Activated CD8-positive, alpha-beta T cell treated with anti-CD3 and anti-CD28 coated beads for 36 hours (primary cell): ENCODE measurements at regions of chr1 and their contacts with region 1.

Region 1: DNA sequence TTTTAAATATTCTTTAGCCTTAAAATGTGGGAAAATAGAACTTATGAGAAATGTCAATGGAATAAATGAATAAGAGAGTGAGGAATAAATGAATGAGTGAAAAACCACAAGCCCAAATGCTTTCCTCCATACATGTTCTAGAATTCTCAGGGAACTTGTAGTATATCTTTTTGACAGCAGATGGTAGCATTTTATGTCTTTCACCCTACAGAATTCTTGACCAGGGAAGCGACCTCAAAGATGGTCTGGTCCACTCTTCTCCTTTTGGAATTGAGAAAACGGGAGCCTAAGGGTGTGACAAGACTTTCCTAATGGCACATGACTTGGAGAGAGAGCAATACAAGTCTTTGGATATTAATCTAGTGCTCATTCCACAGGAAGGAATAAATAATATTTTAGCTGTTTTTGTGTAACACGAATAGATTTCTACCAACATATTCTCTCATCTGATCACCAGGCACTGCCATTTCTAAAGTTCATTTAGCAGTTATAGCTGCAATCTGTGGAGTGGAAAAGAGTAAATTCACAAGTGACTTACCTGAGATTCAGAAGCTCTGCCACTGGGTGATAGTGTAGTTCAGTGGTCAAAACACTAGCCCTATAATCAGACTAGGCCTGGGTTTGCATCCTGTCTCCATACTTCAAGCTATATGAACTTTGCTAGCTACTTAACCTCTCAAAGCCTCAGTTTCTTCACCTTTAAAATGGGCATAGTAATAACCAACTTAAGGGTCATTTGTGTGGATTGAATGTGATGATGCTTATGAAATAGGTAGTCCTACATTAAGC is 15.0 kb upstream of the F5 start:
- DNase-seq: no peak
- ATAC-seq: peak; percentile 38
- H3K4me3 Mint-ChIP-seq: no peak overlapping the region
- H3K27ac Mint-ChIP-seq: peak overlapping the region; percentile 69
- H3K4me1 Mint-ChIP-seq: peaks cover 47% of the 10 kb centered on the region
- H3K27me3 Mint-ChIP-seq: no peaks in the 10 kb centered on the region
- CTCF ChIP-seq: peak; percentile 77

Region 2: DNA sequence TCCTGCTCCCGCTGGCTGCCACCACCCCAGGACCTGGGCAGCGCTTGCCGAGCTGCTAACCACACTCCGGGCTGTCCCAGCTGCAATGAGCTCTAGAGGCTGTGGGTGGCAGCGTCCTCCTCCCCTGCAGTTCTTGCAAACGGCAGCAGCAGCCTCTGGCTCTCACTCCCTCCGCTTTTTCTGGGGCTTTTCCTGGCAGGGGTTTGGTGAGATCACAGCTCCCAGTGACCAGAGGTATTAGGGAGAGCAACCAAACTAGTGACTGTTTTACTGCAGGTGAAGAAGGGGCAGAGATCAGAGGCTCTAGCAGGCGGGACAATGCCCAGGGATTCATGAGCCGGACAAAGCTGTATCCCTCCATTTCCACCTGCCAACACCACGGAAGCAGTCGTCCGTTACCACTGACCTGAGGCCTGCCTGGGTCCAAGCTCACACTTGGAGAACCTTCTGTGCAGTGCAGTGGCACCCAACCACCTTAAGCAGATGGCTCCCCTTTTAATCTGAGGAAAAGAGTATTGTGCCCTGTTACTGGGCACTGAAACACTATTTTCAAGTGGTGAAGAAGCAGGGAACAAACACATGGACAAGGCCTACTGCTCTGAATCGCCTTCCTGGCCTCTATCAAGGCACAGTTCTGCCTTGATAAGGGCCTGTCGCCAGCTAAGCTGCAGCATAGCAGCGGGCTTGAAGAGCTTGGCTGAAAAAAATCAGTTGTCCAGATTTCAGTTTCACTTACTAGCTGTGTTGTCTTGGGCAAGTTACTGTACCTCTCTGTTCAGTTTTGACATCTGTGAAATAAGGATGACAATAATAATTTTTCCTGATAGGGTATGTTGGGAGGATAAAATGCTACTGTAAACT is 14.7 kb before region 1 on chr1 and contains the start of gene F5:
- CTCF ChIA-PET with region 1: interaction called, 38 read pairs
- POLR2A ChIA-PET with region 1: interaction called, 3 read pairs
- intact Hi-C with region 1: no loop called
- DNase-seq: peak; percentile 90
- ATAC-seq: peak; percentile 90
- H3K4me3 Mint-ChIP-seq: peak within 1 kb of the TSS; percentile 91
- H3K27ac Mint-ChIP-seq: peak within 1 kb of the TSS; percentile 91
- H3K4me1 Mint-ChIP-seq: peaks cover 71% of the 10 kb centered on the region
- H3K27me3 Mint-ChIP-seq: no peaks in the 10 kb centered on the region
- CTCF ChIP-seq: peak; percentile 66
- total RNA-seq, gene F5: 20.7 to 23.3 TPM

Region 3: DNA sequence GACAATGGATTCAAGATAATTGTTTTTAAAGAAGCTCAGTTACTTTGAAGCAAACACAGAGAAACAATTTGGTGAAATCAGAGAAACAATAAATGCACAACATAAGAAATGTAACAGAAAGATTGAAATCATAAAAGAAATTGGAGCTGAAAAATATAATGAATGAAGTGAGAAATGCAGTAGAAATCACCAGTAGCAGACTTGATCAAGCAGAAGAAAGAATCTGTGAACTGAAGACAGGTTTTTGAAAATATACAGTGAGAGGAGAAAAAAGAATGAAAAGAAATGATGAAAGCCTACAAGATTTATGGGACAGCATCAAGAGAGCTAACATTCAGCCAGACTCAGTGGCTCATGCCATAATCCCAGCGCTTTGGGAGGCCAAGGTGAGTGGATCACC is 32.9 kb after region 1 on chr1:
- CTCF ChIA-PET with region 1: interaction called, 15 read pairs
- POLR2A ChIA-PET with region 1: no interaction called
- intact Hi-C with region 1: no loop called
- DNase-seq: no peak
- ATAC-seq: no peak
- H3K4me3 Mint-ChIP-seq: no peak overlapping the region
- H3K27ac Mint-ChIP-seq: no peak overlapping the region
- H3K4me1 Mint-ChIP-seq: peaks cover 19% of the 10 kb centered on the region
- H3K27me3 Mint-ChIP-seq: no peaks in the 10 kb centered on the region
- CTCF ChIP-seq: no peak

Region 4: GRCh38 chr1:169653873-169654272 is 52.6 kb after region 1 on chr1:
- CTCF ChIA-PET with region 1: interaction called, 12 read pairs
- POLR2A ChIA-PET with region 1: no interaction called
- intact Hi-C with region 1: no loop called
- DNase-seq: no peak
- ATAC-seq: no peak
- H3K4me3 Mint-ChIP-seq: no peak overlapping the region
- H3K27ac Mint-ChIP-seq: no peak overlapping the region
- H3K4me1 Mint-ChIP-seq: peaks cover 50% of the 10 kb centered on the region
- H3K27me3 Mint-ChIP-seq: no peaks in the 10 kb centered on the region
- CTCF ChIP-seq: no peak

Region 5: GRCh38 chr1:169694304-169695075 is 93.2 kb after region 1 on chr1:
- CTCF ChIA-PET with region 1: interaction called, 96 read pairs
- POLR2A ChIA-PET with region 1: interaction called, 9 read pairs
- intact Hi-C with region 1: loop called (anchors 5 kb)
- DNase-seq: peak; percentile 58
- ATAC-seq: peak; percentile 39
- H3K4me3 Mint-ChIP-seq: peak overlapping the region; percentile 2
- H3K27ac Mint-ChIP-seq: peak overlapping the region; percentile 88
- H3K4me1 Mint-ChIP-seq: peaks cover 91% of the 10 kb centered on the region
- H3K27me3 Mint-ChIP-seq: no peaks in the 10 kb centered on the region
- CTCF ChIP-seq: peak; percentile 55